B cell (primary cell): ENCODE measurements at regions of chr11 and their contacts with region 1.

Region 1: DNA sequence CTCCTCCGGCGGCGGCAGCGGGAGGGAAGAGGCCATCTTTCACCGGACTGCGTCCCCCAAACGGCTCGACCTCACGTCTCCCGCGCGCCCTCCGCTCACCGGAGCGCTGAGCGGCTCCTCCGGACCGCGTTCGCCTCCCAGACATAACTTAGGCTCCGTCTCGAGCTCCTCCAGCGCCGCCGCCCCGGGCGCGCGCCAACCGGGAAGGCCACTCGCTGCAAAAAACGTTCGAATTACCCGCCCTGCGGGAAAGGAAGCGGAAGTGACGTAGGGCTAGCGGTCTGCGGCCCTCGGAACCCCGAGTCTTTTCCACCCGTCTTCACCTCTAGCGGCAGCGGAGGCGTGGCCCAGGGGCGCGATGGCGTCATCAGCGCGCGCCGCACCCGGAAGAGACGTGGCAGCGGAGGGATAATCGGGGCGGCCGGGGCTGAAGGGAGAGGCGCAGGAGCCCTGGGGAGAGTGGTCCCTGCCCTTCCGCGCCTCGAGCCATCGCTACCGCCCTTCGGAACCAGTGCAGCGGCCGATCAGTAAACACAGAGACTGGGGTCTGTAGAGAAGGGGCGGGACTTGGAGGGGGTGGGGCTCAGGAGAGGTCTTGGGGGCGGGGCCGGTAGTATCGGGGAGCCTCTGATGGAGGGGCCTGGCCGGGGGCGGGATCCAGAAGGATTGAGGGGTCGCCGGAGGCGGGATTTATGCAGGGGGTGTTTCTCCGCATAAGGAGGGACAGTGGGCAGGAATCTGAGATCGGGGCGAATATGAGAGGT is at the starts of genes CDCA5 and ZFPL1:
- DNase-seq: peak; percentile 98
- ATAC-seq: peak; percentile 87
- H3K4me3 ChIP-seq: peak within 1 kb of the TSS; percentile 61 to 81 (median 76)
- H3K4me3 Mint-ChIP-seq: peak within 1 kb of the TSS; percentile 98
- H3K27ac ChIP-seq: peak within 1 kb of the TSS; percentile 91 to 94
- H3K27ac Mint-ChIP-seq: peak within 1 kb of the TSS; percentile 100
- H3K4me1 ChIP-seq: peaks cover 12 to 19% of the 10 kb centered on the region in 2 donors
- H3K4me1 Mint-ChIP-seq: peaks cover 28% of the 10 kb centered on the region
- H3K27me3 ChIP-seq: no peaks in the 10 kb centered on the region
- H3K27me3 Mint-ChIP-seq: no peaks in the 10 kb centered on the region
- CTCF ChIP-seq: no peak
- total RNA-seq, gene CDCA5: 0.78 and 1.4 TPM in 2 replicates
- total RNA-seq, gene ZFPL1: 47.9 and 57.3 TPM in 2 replicates

Region 2: GRCh38 chr11:64887757-64888405 is 196.1 kb before region 1 on chr11:
- CTCF ChIA-PET with region 1: no interaction called
- POLR2A ChIA-PET with region 1: no interaction called
- intact Hi-C with region 1: no loop called
- DNase-seq: peak; percentile 90
- ATAC-seq: peak; percentile 97
- H3K4me3 ChIP-seq: peak overlapping the region in 4 of 5 experiments; percentile 14 to 50 (median 42)
- H3K4me3 Mint-ChIP-seq: peak overlapping the region; percentile 84
- H3K27ac ChIP-seq: peak overlapping the region; percentile 43 to 56
- H3K27ac Mint-ChIP-seq: peak overlapping the region; percentile 88
- H3K4me1 ChIP-seq: peaks cover 25 to 33% of the 10 kb centered on the region in 2 donors
- H3K4me1 Mint-ChIP-seq: peaks cover 34% of the 10 kb centered on the region
- H3K27me3 ChIP-seq: no peaks in the 10 kb centered on the region
- H3K27me3 Mint-ChIP-seq: no peaks in the 10 kb centered on the region
- CTCF ChIP-seq: peak; percentile 91

Region 3: GRCh38 chr11:64924102-64924851 is 159.7 kb before region 1 on chr11 and contains the start of gene PPP2R5B:
- CTCF ChIA-PET with region 1: no interaction called
- POLR2A ChIA-PET with region 1: no interaction called
- intact Hi-C with region 1: loop called (anchors 1 kb)
- DNase-seq: peak; percentile 92
- ATAC-seq: peak; percentile 94
- H3K4me3 ChIP-seq: peak within 1 kb of the TSS; percentile 58 to 76 (median 69)
- H3K4me3 Mint-ChIP-seq: peak within 1 kb of the TSS; percentile 97
- H3K27ac ChIP-seq: peak within 1 kb of the TSS; percentile 69 to 81
- H3K27ac Mint-ChIP-seq: peak within 1 kb of the TSS; percentile 97
- H3K4me1 ChIP-seq: peaks cover 14 to 33% of the 10 kb centered on the region in 2 donors
- H3K4me1 Mint-ChIP-seq: peaks cover 22% of the 10 kb centered on the region
- H3K27me3 ChIP-seq: no peaks in the 10 kb centered on the region
- H3K27me3 Mint-ChIP-seq: no peaks in the 10 kb centered on the region
- CTCF ChIP-seq: no peak
- total RNA-seq, gene PPP2R5B: 22.6 and 24.2 TPM in 2 replicates

Region 4: GRCh38 chr11:65040847-65041621 is 43.0 kb before region 1 on chr11 and contains the start of gene SAC3D1:
- CTCF ChIA-PET with region 1: interaction called, 6 read pairs
- POLR2A ChIA-PET with region 1: no interaction called
- intact Hi-C with region 1: loop called (anchors 1 kb)
- DNase-seq: peak; percentile 92
- ATAC-seq: peak; percentile 94
- H3K4me3 ChIP-seq: peak within 1 kb of the TSS; percentile 50 to 80 (median 75)
- H3K4me3 Mint-ChIP-seq: peak within 1 kb of the TSS; percentile 95
- H3K27ac ChIP-seq: peak within 1 kb of the TSS; percentile 67 to 72
- H3K27ac Mint-ChIP-seq: peak within 1 kb of the TSS; percentile 96
- H3K4me1 ChIP-seq: peaks cover 7 to 22% of the 10 kb centered on the region in 2 donors
- H3K4me1 Mint-ChIP-seq: peaks cover 14% of the 10 kb centered on the region
- H3K27me3 ChIP-seq: no peaks in the 10 kb centered on the region
- H3K27me3 Mint-ChIP-seq: no peaks in the 10 kb centered on the region
- CTCF ChIP-seq: no peak
- total RNA-seq, gene SAC3D1: 5.9 and 7.5 TPM in 2 replicates

Region 5: DNA sequence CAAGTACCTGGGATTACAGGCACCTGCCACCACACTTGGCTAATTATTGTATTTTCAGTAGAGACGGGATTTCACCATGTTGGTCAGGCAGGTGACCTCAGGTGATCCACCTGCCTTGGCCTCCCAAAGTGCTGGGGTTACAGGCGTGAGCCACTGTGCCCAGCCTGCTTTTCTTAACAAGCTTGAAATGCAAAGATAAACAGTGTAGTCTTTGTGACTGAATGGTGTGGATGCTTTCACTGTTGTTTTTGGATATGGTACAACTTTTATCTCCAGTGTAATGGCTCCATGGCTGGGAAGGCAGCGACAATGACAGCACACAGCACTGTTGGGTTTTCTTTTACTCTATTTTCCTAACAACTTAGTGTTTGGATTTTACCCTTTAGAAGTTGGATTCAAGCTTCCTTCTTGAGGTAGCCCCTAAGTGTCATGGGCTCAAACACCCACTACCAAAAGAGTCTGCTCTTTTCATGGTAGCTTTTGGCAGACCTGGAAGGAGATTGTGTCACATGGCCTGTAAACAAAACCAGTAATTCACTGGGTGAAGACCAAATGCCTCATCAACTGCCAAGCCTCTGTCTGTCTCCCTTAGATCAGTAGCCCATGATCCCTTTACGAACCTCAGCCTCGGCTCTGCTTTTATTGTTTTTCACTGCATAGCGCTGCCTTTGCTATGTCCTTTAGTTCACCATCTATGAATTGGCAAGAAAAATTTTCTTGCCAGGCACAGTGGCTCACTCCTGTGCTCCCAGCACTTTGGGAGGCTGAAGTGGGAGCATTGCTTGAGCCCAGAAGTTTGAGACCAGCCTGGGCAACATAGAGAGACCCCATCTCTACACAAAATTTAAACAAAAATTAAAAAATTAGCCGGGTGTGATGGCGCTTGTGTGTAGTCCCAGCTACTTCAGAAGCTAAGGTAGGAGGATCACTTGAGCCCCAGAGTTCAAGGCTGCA is 18.4 kb after region 1 on chr11:
- CTCF ChIA-PET with region 1: no interaction called
- POLR2A ChIA-PET with region 1: no interaction called
- intact Hi-C with region 1: no loop called
- DNase-seq: no peak
- ATAC-seq: no peak
- H3K4me3 ChIP-seq: no peak overlapping the region
- H3K4me3 Mint-ChIP-seq: no peak overlapping the region
- H3K27ac ChIP-seq: no peak overlapping the region
- H3K27ac Mint-ChIP-seq: no peak overlapping the region
- H3K4me1 ChIP-seq: peaks cover 0 to under 1% of the 10 kb centered on the region in 2 donors
- H3K4me1 Mint-ChIP-seq: peaks cover 16% of the 10 kb centered on the region
- H3K27me3 ChIP-seq: no peaks in the 10 kb centered on the region
- H3K27me3 Mint-ChIP-seq: no peaks in the 10 kb centered on the region
- CTCF ChIP-seq: no peak

Region 6: DNA sequence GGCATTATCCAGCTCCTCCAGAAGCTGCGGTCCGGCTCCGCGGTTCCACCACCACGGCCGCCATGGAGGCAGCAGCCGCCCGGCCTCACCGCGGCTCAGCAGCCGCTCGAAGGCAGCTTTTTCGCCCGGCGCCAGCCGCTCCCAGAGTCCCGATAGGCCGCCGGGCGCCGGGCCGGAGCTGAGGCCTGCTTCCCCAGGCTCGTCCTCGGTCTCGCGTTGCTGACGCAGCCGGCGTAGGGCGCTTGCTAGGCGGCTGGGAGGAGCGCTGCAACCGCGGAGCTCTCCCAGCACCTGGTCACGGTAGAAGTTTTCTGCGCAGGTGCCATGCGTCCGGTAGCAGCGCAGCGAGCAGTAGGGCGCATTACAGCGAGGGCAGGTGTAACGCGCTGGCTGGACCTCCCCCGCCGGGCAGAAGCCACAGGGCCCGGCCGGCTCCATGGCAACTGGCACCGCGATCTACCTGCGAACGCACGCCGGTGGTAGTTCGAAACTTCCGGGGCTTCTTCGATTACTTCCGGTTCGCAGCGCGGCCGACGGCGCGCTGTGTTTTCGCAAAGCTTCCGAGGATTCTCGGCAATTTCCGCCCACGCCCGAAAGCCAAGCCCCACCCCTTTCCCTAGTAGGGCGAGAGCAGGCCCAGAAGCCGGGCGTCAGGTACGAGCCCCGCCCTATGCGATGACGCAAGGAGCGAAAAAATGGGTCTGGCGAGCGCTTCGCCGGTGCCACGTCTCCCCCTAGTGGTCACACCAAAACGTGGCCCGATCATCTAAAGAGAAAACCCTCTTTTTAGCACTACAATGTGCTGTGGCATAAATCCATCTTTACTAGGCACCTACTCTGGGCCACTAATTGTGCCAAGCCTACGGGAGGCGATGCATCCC is 33.4 kb after region 1 on chr11 and contains the start of gene ZNHIT2:
- CTCF ChIA-PET with region 1: interaction called, 3 read pairs
- POLR2A ChIA-PET with region 1: interaction called, 5 read pairs
- intact Hi-C with region 1: loop called (anchors 1 kb)
- DNase-seq: peak; percentile 100
- ATAC-seq: peak; percentile 74
- H3K4me3 ChIP-seq: peak within 1 kb of the TSS; percentile 0 to 80 (median 80)
- H3K4me3 Mint-ChIP-seq: peak within 1 kb of the TSS; percentile 91
- H3K27ac ChIP-seq: peak within 1 kb of the TSS; percentile 69 to 96
- H3K27ac Mint-ChIP-seq: peak within 1 kb of the TSS; percentile 91
- H3K4me1 ChIP-seq: peaks cover 38 to 60% of the 10 kb centered on the region in 2 donors
- H3K4me1 Mint-ChIP-seq: peaks cover 71% of the 10 kb centered on the region
- H3K27me3 ChIP-seq: no peaks in the 10 kb centered on the region
- H3K27me3 Mint-ChIP-seq: no peaks in the 10 kb centered on the region
- CTCF ChIP-seq: peak; percentile 92
- total RNA-seq, gene ZNHIT2: 14.1 and 14.5 TPM in 2 replicates